Heart right ventricle (tissue), 16 donors: ENCODE measurements at regions of chr7 and their contacts with region 1.

Region 1: GRCh38 chr7:91940572-91941341 is at the start of gene AKAP9:
- DNase-seq: peak; percentile 89 to 90
- ATAC-seq: peak; percentile 95 to 98 (median 96)
- H3K4me3 ChIP-seq: peak within 1 kb of the TSS; percentile 57 to 94 (median 79)
- H3K27ac ChIP-seq: peak within 1 kb of the TSS; percentile 85 to 98 (median 93)
- H3K4me1 ChIP-seq: peaks cover 0 to 41% (median 24%) of the 10 kb centered on the region in 9 donors
- H3K27me3 ChIP-seq: no peaks in the 10 kb centered on the region
- CTCF ChIP-seq: peak in 1 of 9 donors; percentile 7
- total RNA-seq, gene AKAP9: 35.8 to 62.3 (median 49.7) TPM

Region 2: DNA sequence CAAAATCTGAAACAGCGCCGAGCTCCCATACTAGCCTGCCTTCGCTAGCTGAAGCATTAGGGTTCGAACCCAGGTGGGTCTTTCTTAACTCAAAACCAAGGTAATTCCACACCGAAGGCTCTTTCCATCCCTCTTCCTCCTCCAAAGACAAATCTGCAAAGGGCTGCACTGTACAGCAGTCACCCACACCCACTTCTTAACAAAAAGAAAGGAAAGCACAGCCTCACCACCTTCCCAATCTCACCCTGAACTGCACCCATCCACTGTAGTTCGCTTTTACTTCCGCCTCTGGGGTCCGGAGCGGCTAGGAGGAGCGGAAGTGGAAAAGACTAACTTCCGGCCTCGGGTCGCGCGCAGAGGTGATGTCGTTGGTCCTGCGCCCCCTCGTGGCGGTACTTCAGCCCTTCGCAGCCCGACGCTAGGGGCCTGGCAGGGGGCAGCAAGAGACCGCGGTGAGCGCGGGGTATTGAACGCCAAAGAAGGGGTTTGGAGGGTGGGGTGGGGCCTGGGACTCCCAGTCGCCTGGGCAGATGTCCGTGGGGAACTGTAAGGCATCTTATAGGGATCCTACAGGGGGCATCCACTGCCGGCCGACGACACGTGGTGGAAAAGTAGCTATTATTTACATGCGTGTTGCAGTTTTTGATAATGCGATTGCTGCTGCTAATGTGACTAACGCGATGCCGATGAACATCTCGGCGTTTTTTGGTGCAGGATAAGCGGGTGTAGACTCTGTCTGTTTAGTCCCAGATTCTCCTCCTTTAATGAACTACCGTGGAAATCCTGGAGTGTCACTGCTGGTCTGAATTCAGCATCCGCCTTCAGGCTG is 60.1 kb before region 1 on chr7 and contains the start of gene MTERF1:
- intact Hi-C with region 1: loop called in 2 of 10 experiments (anchors 2 to 5 kb)
- DNase-seq: peak; percentile 93
- ATAC-seq: peak; percentile 97 to 100 (median 99)
- H3K4me3 ChIP-seq: peak within 1 kb of the TSS; percentile 59 to 91 (median 80)
- H3K27ac ChIP-seq: peak within 1 kb of the TSS in 9 of 10 donors; percentile 8 to 84 (median 46)
- H3K4me1 ChIP-seq: peaks cover 0 to 29% (median 23%) of the 10 kb centered on the region in 9 donors
- H3K27me3 ChIP-seq: no peaks in the 10 kb centered on the region
- CTCF ChIP-seq: peak; percentile 89 to 100 (median 95)
- total RNA-seq, gene MTERF1: 5.9 to 9.9 (median 7.1) TPM

Region 3: DNA sequence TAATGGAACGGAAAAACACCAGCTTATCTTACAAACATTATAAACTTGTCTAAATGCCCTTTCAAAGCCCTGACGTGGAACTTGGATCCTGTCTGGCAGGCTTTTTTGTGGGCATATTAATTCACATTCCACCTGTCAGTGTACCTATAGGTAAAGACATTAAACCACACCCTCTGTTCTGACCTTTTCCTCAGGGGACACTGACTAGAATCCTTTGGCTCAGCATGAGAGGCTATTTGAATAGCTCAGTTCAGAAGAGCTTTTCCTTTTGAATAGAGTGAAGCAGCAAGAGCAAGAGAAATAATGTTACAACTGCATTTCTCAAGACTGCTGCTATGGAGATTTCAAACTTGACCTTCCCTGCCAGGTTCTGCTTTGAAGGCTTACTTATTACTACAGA is 116.6 kb after region 1 on chr7:
- intact Hi-C with region 1: loop called in 1 of 10 experiments (anchors 10 kb)
- DNase-seq: no peak
- ATAC-seq: peak in 6 of 8 donors; percentile 38 to 69 (median 52)
- H3K4me3 ChIP-seq: peak overlapping the region in 2 of 10 donors; percentile 13 to 14
- H3K27ac ChIP-seq: peak overlapping the region in 9 of 10 donors; percentile 8 to 59 (median 51)
- H3K4me1 ChIP-seq: peaks cover 0 to 39% (median 6%) of the 10 kb centered on the region in 9 donors
- H3K27me3 ChIP-seq: no peaks in the 10 kb centered on the region
- CTCF ChIP-seq: no peak